ENCODE measurements at regions of chr5 and their contacts with region 1.

Region 1: GRCh38 chr5:32274548-32275395 is 38.0 kb downstream of the MTMR12 start:
- DNase-seq: peak in 1 of 3 donors; percentile 54
- ATAC-seq: peak; percentile 23 to 78 (median 53)
- H3K4me3 ChIP-seq: no peak overlapping the region
- H3K27ac ChIP-seq: peak overlapping the region; percentile 5 to 64 (median 24)
- H3K4me1 ChIP-seq: peaks cover 0 to 33% (median 4%) of the 10 kb centered on the region in 4 donors
- H3K27me3 ChIP-seq: no peaks in the 10 kb centered on the region
- CTCF ChIP-seq: no peak
- POLR2A ChIP-seq: no peak

Region 2: GRCh38 chr5:32239385-32239784 is 35.4 kb before region 1 on chr5:
- intact Hi-C with region 1: loop called in 1 of 2 experiments (anchors 5 kb)
- DNase-seq: no peak
- ATAC-seq: no peak
- H3K4me3 ChIP-seq: no peak overlapping the region
- H3K27ac ChIP-seq: no peak overlapping the region
- H3K4me1 ChIP-seq: peaks cover 0 to 8% (median 4%) of the 10 kb centered on the region in 4 donors
- H3K27me3 ChIP-seq: no peaks in the 10 kb centered on the region
- CTCF ChIP-seq: no peak
- POLR2A ChIP-seq: no peak

Region 3: DNA sequence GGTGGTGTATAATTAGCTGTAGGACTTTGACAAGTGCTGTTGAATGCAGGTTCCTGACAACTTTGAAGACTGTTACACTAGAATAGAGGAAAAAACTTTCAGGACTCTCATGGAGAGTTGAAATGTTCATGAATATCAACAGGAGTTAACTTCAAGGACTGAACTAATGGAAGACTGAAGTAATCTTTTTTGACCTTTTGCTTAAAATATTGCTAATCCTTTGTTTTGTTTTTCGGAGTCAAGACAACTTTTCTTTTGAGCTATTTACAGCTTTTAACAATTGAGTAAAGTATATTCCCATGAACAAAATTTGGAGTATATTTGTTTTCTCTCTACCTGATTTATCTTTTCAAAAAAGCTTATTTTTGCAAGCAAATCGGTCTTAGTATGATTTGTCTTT is 72.1 kb after region 1 on chr5:
- intact Hi-C with region 1: no loop called
- DNase-seq: no peak
- ATAC-seq: no peak
- H3K4me3 ChIP-seq: no peak overlapping the region
- H3K27ac ChIP-seq: no peak overlapping the region
- H3K4me1 ChIP-seq: peaks cover 0 to 11% (median 0%) of the 10 kb centered on the region in 4 donors
- H3K27me3 ChIP-seq: no peaks in the 10 kb centered on the region
- CTCF ChIP-seq: no peak
- POLR2A ChIP-seq: no peak